ENCODE measurements at regions of chr4 and their contacts with region 1.

Region 1: DNA sequence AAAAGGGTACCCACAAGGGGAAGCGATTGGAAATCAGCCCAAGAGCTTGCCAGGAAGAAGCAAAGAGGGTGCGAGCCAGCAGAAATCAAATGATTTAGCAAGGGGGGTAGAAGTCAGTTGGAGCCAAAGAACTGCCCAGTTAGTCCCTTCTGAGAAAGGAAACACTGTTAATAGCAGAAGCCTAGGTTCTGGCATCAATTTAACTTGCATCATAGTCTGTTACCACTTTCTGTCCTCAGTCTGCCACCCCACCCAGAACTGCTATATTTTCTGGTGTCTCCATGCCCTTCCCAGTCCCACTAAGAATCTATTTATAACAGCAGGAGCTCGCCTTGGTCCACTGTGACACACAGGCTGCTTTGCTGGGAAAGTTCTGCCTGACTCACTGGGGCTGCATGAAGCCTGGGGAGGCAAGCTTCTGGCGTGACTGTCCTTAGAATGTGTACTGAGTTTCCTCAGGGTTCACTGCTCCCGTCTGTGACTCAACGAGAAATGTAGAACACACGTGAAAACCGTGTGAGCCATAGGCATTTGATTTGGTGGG is 157.8 kb upstream of the TTC29 start:
- DNase-seq: no peak
- H3K4me3 ChIP-seq: no peak overlapping the region
- H3K4me3 Mint-ChIP-seq: no peak overlapping the region
- H3K27ac ChIP-seq: no peak overlapping the region
- H3K27ac Mint-ChIP-seq: no peak overlapping the region
- H3K4me1 ChIP-seq: no peaks in the 10 kb centered on the region
- H3K4me1 Mint-ChIP-seq: no peaks in the 10 kb centered on the region
- H3K27me3 ChIP-seq: no peaks in the 10 kb centered on the region
- H3K27me3 Mint-ChIP-seq: peaks cover 0 to 3% (median 1%) of the 10 kb centered on the region in 3 donors
- CTCF ChIP-seq: no peak

Region 2: DNA sequence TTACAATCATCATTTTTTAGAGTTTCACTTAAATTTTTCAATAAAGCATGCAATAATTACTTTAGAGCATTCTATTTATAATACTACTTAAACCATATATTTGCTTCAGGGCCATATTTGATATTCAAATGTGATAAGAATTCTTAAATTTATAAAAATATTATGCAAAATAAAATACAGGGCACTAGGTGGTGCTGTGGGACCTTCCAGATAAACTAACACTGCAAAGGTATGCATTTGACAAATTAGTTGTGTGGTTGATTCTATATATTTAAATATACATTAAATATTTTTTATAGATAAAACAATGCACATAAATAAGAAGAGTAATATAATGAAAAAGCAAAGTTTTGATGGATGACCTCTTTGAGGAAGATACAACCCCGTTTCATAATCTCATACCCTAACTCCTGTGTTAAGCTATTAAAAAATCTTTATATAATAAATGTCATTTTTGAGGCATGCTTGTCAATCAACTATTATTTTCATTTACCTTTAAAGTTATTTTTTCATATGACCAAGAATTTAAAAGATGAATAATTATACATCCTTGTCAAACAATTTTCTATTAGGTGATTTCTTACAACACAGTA is 760.8 kb before region 1 on chr4:
- intact Hi-C with region 1: loop called in 1 of 2 experiments (anchors 10 kb)
- DNase-seq: peak in 2 of 3 donors; percentile 7 to 17
- H3K4me3 ChIP-seq: no peak overlapping the region
- H3K4me3 Mint-ChIP-seq: no peak overlapping the region
- H3K27ac ChIP-seq: no peak overlapping the region
- H3K27ac Mint-ChIP-seq: no peak overlapping the region
- H3K4me1 ChIP-seq: no peaks in the 10 kb centered on the region
- H3K4me1 Mint-ChIP-seq: no peaks in the 10 kb centered on the region
- H3K27me3 ChIP-seq: no peaks in the 10 kb centered on the region
- H3K27me3 Mint-ChIP-seq: no peaks in the 10 kb centered on the region
- CTCF ChIP-seq: peak; percentile 72

Region 3: DNA sequence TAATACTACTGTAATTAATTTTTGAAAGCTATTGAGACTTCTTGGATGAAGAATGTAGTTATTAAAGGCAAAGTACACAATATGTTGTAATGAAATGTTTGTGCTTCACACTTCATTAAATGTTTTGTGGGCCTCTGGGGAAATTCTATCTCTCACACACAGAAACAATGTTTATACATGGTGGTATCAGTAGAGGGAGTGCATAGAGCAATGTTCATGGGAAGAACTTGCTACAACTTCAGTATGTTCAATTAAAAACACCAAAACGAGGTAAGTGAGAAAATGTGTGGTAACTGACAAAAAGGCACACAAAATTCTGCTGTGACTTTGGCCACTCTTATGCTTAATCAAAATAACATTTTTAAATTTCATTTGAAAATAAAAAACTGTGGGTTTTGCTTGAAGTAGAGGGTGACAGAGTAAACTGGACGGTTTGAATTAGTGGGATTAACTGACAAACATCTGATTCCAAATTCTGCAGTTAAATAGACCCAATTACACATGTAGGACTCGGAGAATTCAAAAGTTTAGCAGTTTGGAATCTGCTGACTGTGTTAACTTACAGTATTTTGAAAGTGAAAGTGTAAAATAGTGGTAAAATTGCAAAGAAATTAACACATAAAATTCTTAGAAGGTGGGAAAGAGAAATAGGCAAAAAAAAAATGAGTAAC is 46.4 kb before region 1 on chr4:
- intact Hi-C with region 1: no loop called
- DNase-seq: no peak
- H3K4me3 ChIP-seq: peak overlapping the region; percentile 44 to 73 (median 70)
- H3K4me3 Mint-ChIP-seq: peak overlapping the region; percentile 72 to 96
- H3K27ac ChIP-seq: peak overlapping the region in 1 of 2 donors; percentile 77
- H3K27ac Mint-ChIP-seq: peak overlapping the region in 4 of 7 donors; percentile 64 to 88 (median 70)
- H3K4me1 ChIP-seq: peaks cover 0 to 2% of the 10 kb centered on the region in 2 donors
- H3K4me1 Mint-ChIP-seq: peaks cover 9% of the 10 kb centered on the region
- H3K27me3 ChIP-seq: no peaks in the 10 kb centered on the region
- H3K27me3 Mint-ChIP-seq: peaks cover 0 to 2% (median 0%) of the 10 kb centered on the region in 3 donors
- CTCF ChIP-seq: no peak

Region 4: DNA sequence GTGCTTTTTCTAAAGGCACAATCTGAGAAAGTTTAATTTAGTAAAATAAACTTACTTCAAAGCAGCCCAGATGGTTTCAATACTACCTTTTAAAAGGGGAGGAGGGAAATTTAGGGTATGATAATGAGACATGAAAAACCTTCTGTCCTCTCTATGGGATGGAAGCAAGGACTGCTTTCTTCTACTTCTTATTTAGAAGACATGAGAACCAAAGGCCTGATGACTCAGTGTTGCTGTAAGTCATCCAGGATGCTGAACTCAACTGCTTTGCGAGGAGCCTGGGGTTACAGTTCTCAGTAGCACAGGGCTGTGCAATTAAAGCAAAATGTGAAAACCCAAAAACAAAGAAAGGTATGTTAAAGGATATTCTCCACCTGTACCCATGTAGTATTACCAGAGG is 236.6 kb after region 1 on chr4:
- intact Hi-C with region 1: no loop called
- DNase-seq: no peak
- H3K4me3 ChIP-seq: no peak overlapping the region
- H3K4me3 Mint-ChIP-seq: no peak overlapping the region
- H3K27ac ChIP-seq: no peak overlapping the region
- H3K27ac Mint-ChIP-seq: no peak overlapping the region
- H3K4me1 ChIP-seq: no peaks in the 10 kb centered on the region
- H3K4me1 Mint-ChIP-seq: no peaks in the 10 kb centered on the region
- H3K27me3 ChIP-seq: no peaks in the 10 kb centered on the region
- H3K27me3 Mint-ChIP-seq: no peaks in the 10 kb centered on the region
- CTCF ChIP-seq: no peak

Measured in CD14-positive monocyte (primary cell).